ENCODE measurements at regions of chr6 and their contacts with region 1.

Region 1: GRCh38 chr6:27893059-27893835 is 18.9 kb downstream of the OR2B2 start:
- ATAC-seq: peak; percentile 58 to 72 (median 66)
- H3K4me3 ChIP-seq: peak overlapping the region; percentile 54 to 95 (median 75)
- H3K27ac ChIP-seq: peak overlapping the region; percentile 58 to 67
- H3K4me1 ChIP-seq: peaks cover 16 to 17% of the 10 kb centered on the region in 2 donors

Region 2: GRCh38 chr6:27132532-27133280 is 760.5 kb before region 1 on chr6:
- in situ Hi-C with region 1: loop called in 1 of 9 experiments (anchors 25 kb)
- ATAC-seq: peak; percentile 83 to 92 (median 88)
- H3K4me3 ChIP-seq: peak overlapping the region; percentile 56 to 77 (median 60)
- H3K27ac ChIP-seq: peak overlapping the region in 1 of 2 donors; percentile 54
- H3K4me1 ChIP-seq: peaks cover 0 to 2% of the 10 kb centered on the region in 2 donors

Region 3: GRCh38 chr6:27157459-27158315 is 735.6 kb before region 1 on chr6:
- in situ Hi-C with region 1: loop called in 4 of 9 experiments (anchors 10 to 25 kb)
- ATAC-seq: peak; percentile 82 to 95 (median 92)
- H3K4me3 ChIP-seq: peak overlapping the region; percentile 4 to 41 (median 31)
- H3K27ac ChIP-seq: no peak overlapping the region
- H3K4me1 ChIP-seq: peaks cover 5% of the 10 kb centered on the region in 2 donors

Region 4: DNA sequence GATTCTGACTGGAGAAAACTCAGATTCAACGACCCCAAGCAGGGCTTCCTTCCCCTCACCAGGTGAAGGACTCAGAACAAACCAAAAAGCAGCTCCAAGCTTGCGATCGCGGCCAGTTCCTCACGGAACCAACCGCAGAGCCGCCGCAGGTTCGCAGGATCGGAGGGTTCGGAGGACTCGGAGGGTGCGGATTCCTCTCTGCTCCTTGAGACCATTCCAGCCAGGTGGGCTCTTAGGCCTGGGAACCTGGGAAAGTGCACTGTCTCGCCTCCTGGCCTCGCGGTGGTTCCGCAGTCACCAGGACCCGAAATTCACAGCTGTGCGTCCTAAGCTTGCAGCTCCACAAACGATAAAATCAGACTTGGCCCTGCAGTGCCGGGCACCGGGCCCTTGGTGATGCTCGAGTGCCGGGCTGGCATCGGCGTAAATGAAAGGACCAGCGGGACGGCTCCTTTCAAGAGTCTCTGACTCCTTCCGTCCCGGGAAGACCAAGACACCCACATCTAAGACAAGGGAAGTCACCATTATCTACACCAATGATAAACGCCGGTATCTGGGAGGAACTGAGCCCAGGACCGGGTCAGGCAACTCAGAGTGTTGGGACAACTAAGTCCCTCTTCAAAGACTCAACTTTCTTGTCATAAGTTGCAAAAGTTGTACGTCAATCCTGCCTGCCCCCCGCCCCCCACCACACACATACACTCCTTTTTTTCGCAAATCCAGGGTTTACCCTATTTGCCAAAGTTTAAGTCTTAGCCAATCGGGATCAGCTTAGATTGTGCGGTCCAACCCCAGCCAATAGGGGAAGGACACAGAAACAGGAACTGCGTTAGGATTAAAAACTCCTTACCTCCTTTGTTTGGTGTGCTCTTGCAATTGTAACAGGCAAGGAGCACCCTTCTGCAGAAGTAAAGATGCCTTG is 715.5 kb before region 1 on chr6:
- in situ Hi-C with region 1: loop called in 4 of 9 experiments (anchors 10 to 25 kb)
- ATAC-seq: peak; percentile 81 to 89 (median 86)
- H3K4me3 ChIP-seq: peak overlapping the region; percentile 61 to 97 (median 82)
- H3K27ac ChIP-seq: no peak overlapping the region
- H3K4me1 ChIP-seq: no peaks in the 10 kb centered on the region

Measured in motor neuron (in vitro differentiated cells).